ENCODE measurements at regions of chr3 and their contacts with region 1.

Region 1: DNA sequence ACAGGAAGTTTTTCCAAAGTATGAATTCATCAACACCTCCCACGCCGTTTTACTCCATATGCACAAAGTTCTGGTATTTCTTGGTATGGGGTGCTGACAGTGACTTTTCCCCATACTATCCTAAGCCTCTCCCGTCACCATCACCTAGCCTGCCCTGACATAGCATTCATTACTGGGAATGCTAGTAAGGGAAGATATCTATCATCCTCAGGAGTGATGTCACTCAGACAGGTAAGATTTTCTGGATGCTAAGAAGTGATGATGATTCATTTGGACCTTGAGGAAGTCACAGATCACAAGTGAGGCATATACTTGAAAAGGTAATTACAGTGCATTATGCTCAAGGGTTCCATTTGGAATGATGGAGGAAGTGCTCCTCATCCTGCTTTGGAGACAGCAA is 355.1 kb upstream of the STAC start:
- DNase-seq: no peak
- H3K4me3 ChIP-seq: no peak overlapping the region
- H3K27ac ChIP-seq: no peak overlapping the region
- H3K4me1 ChIP-seq: no peaks in the 10 kb centered on the region
- H3K27me3 ChIP-seq: no peaks in the 10 kb centered on the region
- CTCF ChIP-seq: no peak
- POLR2A ChIP-seq: no peak

Region 2: GRCh38 chr3:35871009-35871408 is 154.2 kb before region 1 on chr3:
- intact Hi-C with region 1: loop called (anchors 5 kb)
- DNase-seq: no peak
- H3K4me3 ChIP-seq: no peak overlapping the region
- H3K27ac ChIP-seq: no peak overlapping the region
- H3K4me1 ChIP-seq: no peaks in the 10 kb centered on the region
- H3K27me3 ChIP-seq: no peaks in the 10 kb centered on the region
- CTCF ChIP-seq: no peak
- POLR2A ChIP-seq: no peak

Measured in breast epithelium (tissue), 4 donors.